Esophagus squamous epithelium (tissue), 5 donors: ENCODE measurements at regions of chr11 and their contacts with region 1.

Region 1: DNA sequence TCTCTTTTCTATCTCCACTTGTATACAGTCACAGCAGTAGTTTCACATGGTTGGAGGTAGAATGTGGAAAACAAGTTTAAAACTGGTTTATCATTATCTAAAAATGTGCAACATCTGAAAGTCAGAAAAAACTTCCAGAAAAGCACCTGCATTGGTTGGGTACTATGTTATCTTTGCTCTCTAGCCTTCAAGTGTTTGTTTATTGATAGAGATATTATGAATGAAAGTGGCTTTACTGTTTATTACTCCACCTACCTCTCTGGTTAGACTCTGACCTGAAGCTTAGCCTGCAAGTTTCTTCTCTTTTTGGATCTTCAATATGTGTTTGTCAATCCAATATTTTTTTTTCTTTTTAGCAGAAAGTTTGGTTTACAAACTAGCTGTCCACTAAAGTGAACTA is 2161.4 kb upstream of the RAG2 start:
- DNase-seq: no peak
- H3K4me3 ChIP-seq: no peak overlapping the region
- H3K27ac ChIP-seq: no peak overlapping the region
- H3K4me1 ChIP-seq: no peaks in the 10 kb centered on the region
- H3K27me3 ChIP-seq: no peaks in the 10 kb centered on the region
- CTCF ChIP-seq: no peak
- POLR2A ChIP-seq: no peak

Region 2: DNA sequence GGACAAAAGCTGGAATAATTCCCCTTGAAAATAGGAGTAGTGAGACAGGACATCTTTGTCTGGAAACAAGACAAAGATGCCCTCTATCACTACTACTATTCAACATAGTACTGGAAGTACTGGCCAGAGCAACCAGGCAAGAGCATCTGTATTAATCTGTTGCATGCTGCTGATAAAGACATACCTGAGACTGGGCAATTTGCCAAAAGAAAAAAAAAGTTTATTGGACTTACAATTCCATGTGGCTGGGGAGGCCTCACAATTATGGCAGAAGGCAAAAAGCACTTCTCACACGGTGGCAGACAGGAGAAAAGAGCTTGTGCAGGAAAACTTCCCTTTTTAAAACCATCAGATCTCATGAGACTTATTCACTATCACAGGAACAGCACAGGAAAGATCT is 14.4 kb after region 1 on chr11:
- intact Hi-C with region 1: loop called (anchors 2 kb)
- DNase-seq: no peak
- H3K4me3 ChIP-seq: no peak overlapping the region
- H3K27ac ChIP-seq: no peak overlapping the region
- H3K4me1 ChIP-seq: no peaks in the 10 kb centered on the region
- H3K27me3 ChIP-seq: no peaks in the 10 kb centered on the region
- CTCF ChIP-seq: no peak
- POLR2A ChIP-seq: no peak

Region 3: DNA sequence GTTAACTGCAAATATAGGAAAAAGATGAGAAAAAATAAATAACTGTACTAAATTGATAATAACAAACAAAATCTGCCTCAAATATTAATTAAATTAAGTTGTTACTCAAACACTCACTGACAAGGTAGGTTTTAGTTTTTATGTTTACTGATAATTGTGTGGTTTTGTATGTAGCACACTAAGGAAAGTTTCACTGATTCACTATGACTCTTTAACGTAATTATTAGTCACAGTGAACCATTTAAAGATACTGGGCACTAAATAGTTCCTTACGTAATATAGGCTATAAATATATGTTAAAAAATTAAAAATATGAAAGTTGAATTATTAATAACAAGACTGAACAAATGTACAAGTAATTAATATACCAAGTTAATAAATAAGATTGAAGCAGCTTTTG is 168.6 kb after region 1 on chr11:
- intact Hi-C with region 1: no loop called
- DNase-seq: no peak
- H3K4me3 ChIP-seq: no peak overlapping the region
- H3K27ac ChIP-seq: no peak overlapping the region
- H3K4me1 ChIP-seq: no peaks in the 10 kb centered on the region
- H3K27me3 ChIP-seq: no peaks in the 10 kb centered on the region
- CTCF ChIP-seq: no peak
- POLR2A ChIP-seq: no peak